ENCODE measurements at regions of chr1 and their contacts with region 1.

Region 1: GRCh38 chr1:178634445-178634844 is 90.6 kb upstream of the RALGPS2 start:
- DNase-seq: peak; percentile 69
- H3K4me3 ChIP-seq: no peak overlapping the region
- H3K27me3 ChIP-seq: no peaks in the 10 kb centered on the region
- CTCF ChIP-seq: no peak

Region 2: DNA sequence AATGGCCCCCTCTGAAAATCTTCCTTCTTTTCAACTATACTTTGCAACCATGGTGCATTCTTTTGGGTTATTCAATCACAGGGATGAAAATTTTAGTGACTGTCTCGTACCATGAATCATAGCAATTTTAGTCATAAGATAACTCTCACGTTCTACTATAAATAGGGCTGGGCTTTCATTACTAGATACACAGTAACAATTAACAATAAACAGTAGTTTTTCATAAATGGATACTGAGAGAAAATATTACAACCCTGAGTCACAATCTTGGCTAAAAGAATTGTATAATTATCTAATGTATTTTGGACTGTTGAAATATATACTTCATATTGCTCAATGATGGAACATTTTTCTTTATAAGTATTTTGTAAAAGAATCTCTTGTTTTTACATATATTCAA is 25.4 kb before region 1 on chr1:
- CTCF ChIA-PET with region 1: interaction called, 3 read pairs
- POLR2A ChIA-PET with region 1: interaction called, 14 read pairs
- DNase-seq: peak; percentile 85
- H3K4me3 ChIP-seq: no peak overlapping the region
- H3K27me3 ChIP-seq: no peaks in the 10 kb centered on the region
- CTCF ChIP-seq: no peak

Region 3: DNA sequence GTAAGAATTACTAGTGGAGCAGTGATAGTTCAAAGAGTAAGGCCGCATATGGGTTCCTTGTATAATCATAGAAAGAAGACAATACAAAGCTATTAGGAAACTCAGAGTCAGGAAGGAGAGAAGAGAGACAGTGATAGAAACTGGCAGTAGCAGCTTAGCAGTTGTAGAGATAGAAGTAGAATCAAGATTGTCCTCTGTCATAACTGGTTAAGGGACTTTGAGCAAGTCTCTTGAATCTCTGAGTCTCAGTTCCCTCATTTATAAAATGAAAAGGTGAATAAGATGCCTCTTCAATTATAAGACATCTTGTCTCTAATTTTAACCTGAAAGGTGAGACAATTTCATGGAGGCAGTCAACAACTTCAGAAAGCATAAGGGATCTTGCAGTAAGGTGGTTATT is 84.1 kb after region 1 on chr1:
- CTCF ChIA-PET with region 1: no interaction called
- POLR2A ChIA-PET with region 1: no interaction called
- DNase-seq: no peak
- H3K4me3 ChIP-seq: no peak overlapping the region
- H3K27me3 ChIP-seq: no peaks in the 10 kb centered on the region
- CTCF ChIP-seq: no peak

Measured in BJ (cell line).